Gastrocnemius medialis (tissue), 4 donors: ENCODE measurements at regions of chr16 and their contacts with region 1.

Region 1: DNA sequence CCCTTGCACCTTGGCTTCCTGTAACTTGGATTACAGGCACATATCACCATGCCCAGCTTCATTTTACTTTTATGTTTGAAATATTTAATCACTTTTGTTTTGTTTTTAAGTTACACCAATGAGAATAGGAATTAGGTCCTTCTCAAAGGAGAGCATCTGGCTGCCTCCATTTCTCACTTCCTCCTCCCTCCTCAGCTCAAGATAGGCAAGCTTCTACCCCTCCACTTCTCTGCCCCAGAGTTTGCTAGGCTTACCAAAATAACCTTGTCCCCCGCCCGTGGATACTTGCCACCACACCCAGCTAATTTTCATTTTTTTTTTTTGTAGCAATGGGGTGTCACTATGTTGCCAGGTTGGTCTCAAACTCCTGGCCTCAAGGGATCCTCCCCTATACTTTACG is 17.9 kb downstream of the GABARAPL2 start:
- DNase-seq: no peak
- ATAC-seq: no peak
- H3K4me3 ChIP-seq: no peak overlapping the region
- H3K27ac ChIP-seq: no peak overlapping the region
- H3K4me1 ChIP-seq: peaks cover 0 to 1% of the 10 kb centered on the region in 2 donors
- H3K27me3 ChIP-seq: no peaks in the 10 kb centered on the region
- CTCF ChIP-seq: no peak
- POLR2A ChIP-seq: no peak

Region 2: GRCh38 chr16:74666425-74667254 is 917.5 kb before region 1 on chr16 and contains the start of gene RFWD3:
- in situ Hi-C with region 1: no loop called
- intact Hi-C with region 1: no loop called
- DNase-seq: peak; percentile 99
- ATAC-seq: peak; percentile 100
- H3K4me3 ChIP-seq: peak within 1 kb of the TSS; percentile 82 to 98 (median 93)
- H3K27ac ChIP-seq: peak within 1 kb of the TSS; percentile 70 to 81 (median 78)
- H3K4me1 ChIP-seq: peaks cover 8 to 11% of the 10 kb centered on the region in 2 donors
- H3K27me3 ChIP-seq: no peaks in the 10 kb centered on the region
- CTCF ChIP-seq: no peak
- POLR2A ChIP-seq: peak in 1 of 2 donors; percentile 37
- total RNA-seq, gene RFWD3: 2.5 to 7.1 (median 4.1) TPM

Region 3: GRCh38 chr16:75172578-75172977 is 411.5 kb before region 1 on chr16:
- in situ Hi-C with region 1: no loop called
- intact Hi-C with region 1: no loop called
- DNase-seq: no peak
- ATAC-seq: no peak
- H3K4me3 ChIP-seq: no peak overlapping the region
- H3K27ac ChIP-seq: no peak overlapping the region
- H3K4me1 ChIP-seq: no peaks in the 10 kb centered on the region
- H3K27me3 ChIP-seq: no peaks in the 10 kb centered on the region
- CTCF ChIP-seq: no peak
- POLR2A ChIP-seq: no peak

Region 4: GRCh38 chr16:75555707-75556430 is 28.2 kb before region 1 on chr16 and contains the start of gene TMEM231:
- in situ Hi-C with region 1: no loop called
- intact Hi-C with region 1: no loop called
- DNase-seq: peak; percentile 95
- ATAC-seq: peak; percentile 93
- H3K4me3 ChIP-seq: peak within 1 kb of the TSS; percentile 76 to 84 (median 82)
- H3K27ac ChIP-seq: peak within 1 kb of the TSS; percentile 76 to 87 (median 82)
- H3K4me1 ChIP-seq: peaks cover 8 to 14% of the 10 kb centered on the region in 2 donors
- H3K27me3 ChIP-seq: no peaks in the 10 kb centered on the region
- CTCF ChIP-seq: no peak
- POLR2A ChIP-seq: peak; percentile 39 to 52
- total RNA-seq, gene TMEM231: 0.76 to 2.3 (median 1.7) TPM

Region 5: DNA sequence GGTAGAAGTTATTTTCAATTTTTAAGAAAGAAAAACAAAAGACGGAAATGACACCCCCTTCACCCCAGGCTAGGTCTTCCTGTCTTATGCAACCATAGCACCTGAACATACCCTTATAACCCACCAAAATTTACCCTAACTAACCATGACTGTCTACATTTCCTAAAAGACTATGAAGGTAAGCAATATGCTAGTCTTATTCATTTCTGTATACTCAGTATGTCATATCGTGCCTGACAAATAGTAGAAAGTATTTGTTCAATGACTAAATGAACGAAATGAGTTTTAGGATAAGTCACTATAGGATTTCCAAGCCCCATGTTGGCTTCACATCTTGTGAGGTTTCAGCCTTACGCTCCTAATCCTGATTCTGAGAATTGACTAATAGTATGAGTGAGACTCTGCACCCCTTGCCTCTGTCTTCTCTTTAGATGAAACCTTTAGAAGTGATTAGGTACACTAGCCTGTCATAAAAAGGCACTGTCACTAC is 32.5 kb after region 1 on chr16:
- in situ Hi-C with region 1: no loop called
- intact Hi-C with region 1: loop called (anchors 5 kb)
- DNase-seq: no peak
- ATAC-seq: no peak
- H3K4me3 ChIP-seq: no peak overlapping the region
- H3K27ac ChIP-seq: no peak overlapping the region
- H3K4me1 ChIP-seq: peaks cover 5 to 6% of the 10 kb centered on the region in 2 donors
- H3K27me3 ChIP-seq: no peaks in the 10 kb centered on the region
- CTCF ChIP-seq: no peak
- POLR2A ChIP-seq: no peak

Region 6: DNA sequence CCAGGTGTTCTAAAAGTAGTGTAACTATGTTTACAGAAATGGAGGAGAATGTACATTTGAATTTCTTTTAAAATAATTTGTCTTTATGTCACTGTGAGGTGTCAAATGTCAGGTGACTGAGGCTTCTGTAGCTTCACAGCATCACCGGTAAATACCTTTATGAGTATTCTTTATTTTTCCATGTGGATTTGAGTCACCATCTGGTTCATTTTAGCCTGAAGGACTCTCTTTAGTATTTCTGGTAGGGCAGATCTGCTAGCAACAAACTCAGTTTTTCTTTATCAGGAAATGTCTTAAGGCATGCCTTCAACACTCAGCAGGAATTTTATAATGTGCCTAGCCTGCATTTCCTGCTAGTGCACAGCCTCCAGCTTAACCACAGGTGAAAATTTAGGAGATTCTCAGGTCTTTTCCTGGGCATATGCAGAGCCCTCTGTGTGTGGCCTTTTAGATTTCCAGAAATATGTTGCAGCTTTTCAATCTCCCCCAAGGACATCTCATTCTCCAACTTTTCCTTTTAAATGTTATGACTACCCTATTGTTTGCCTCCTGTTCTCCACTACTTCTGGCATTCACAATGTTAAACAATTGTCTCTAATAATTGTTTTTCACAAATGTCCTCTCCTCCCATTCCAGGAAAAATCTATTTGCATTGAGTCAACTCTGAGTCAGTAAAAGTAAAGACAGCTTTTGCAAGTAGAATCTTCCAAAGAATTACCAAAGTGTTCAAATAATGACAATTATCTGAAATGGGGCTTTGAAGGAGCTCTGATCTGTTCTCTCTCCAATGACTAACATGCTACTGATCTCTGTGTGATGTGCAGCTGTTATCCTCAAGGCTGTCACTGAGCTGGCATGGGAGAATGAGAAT is 381.6 kb after region 1 on chr16:
- in situ Hi-C with region 1: no loop called
- intact Hi-C with region 1: no loop called
- DNase-seq: no peak
- ATAC-seq: no peak
- H3K4me3 ChIP-seq: no peak overlapping the region
- H3K27ac ChIP-seq: no peak overlapping the region
- H3K4me1 ChIP-seq: no peaks in the 10 kb centered on the region
- H3K27me3 ChIP-seq: no peaks in the 10 kb centered on the region
- CTCF ChIP-seq: no peak
- POLR2A ChIP-seq: no peak